H1 (cell line): ENCODE measurements at regions of chr2 and their contacts with region 1.

Region 1: GRCh38 chr2:182077451-182078142 is 91.9 kb downstream of the PPP1R1C start:
- DNase-seq: no peak
- H3K4me3 ChIP-seq: no peak overlapping the region
- H3K27ac ChIP-seq: no peak overlapping the region
- H3K4me1 ChIP-seq: no peaks in the 10 kb centered on the region
- H3K27me3 ChIP-seq: no peaks in the 10 kb centered on the region
- CTCF ChIP-seq: peak in 2 of 3 experiments; percentile 49; a peak in 2 of 4 replicates
- EP300 ChIP-seq: no peak
- POLR2A ChIP-seq: no peak
- RAD21 ChIP-seq: peak; percentile 70 to 73

Region 2: DNA sequence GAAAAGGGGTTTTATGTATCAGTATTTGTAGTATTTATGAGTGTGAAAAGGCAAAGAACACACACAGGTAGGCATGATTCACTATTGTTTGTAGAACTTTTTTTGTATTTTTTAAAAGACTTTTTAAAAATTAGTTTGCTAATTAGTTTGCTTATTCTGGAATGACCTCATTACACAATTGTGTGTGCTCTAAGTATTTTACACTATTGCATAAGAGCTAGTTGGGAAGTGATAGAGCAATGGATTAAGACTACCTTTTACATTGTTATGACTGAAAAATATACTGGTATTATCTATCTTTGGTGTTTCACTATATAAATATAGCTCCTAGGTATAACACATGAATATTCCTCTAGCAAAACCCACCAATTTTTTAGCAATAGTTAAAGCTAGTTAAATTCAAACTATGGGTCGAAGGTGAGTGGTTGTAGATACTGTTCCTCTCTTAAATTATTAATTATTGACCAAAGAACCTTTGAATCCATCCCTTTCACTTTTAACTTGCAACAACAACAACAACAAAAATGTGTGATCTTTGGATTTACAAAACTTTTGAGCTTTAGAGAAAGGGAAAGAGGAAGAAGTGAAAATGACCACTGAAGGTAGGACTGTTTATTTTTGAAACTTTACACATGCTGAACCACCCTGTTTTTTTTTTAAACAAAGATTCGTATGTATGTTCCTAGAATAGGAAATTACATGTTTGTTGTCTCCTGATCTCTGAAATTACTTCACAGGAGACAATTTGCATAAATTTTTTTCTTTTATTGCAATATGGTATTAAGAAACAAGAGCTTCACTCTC is 167.4 kb before region 1 on chr2:
- CTCF ChIA-PET with region 1: no interaction called
- POLR2A ChIA-PET with region 1: no interaction called
- DNase-seq: no peak
- H3K4me3 ChIP-seq: no peak overlapping the region
- H3K27ac ChIP-seq: no peak overlapping the region
- H3K4me1 ChIP-seq: no peaks in the 10 kb centered on the region
- H3K27me3 ChIP-seq: no peaks in the 10 kb centered on the region
- CTCF ChIP-seq: no peak
- EP300 ChIP-seq: no peak
- POLR2A ChIP-seq: no peak
- RAD21 ChIP-seq: no peak

Region 3: DNA sequence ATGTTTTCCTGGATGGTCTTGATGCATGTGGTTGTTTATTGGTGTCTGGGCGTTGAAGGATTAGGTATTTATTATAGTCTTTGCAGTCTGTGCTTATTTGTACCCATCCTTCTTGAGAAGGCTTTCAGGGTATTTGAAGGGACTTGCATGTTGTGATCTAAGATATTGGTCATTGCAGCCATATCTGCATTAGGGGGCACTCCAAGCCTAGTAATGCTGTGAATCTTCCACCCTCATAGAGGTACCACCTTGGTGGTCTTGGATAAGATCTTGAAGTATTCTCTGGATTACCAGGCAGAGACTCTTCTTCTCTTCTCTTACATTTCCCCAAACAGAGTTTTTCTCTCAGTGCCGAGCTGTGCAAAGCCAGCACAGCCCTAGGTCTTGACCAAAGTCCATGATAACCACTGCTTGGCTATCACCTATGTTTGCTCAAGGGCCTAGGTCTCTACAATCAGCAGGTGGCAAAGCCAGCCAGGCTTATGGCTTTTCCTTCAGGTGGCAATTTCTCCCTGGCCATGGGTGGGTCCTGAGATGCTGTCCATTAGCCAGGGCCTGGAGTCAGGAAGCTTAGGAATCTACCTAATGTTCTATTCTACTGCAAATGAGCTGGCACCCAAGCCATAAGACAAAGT is 107.3 kb before region 1 on chr2:
- CTCF ChIA-PET with region 1: interaction called, 18 read pairs
- POLR2A ChIA-PET with region 1: no interaction called
- DNase-seq: no peak
- H3K4me3 ChIP-seq: no peak overlapping the region
- H3K27ac ChIP-seq: no peak overlapping the region
- H3K4me1 ChIP-seq: no peaks in the 10 kb centered on the region
- H3K27me3 ChIP-seq: no peaks in the 10 kb centered on the region
- CTCF ChIP-seq: peak in 2 of 3 experiments; percentile 46 to 48; a peak in 2 of 4 replicates
- EP300 ChIP-seq: no peak
- POLR2A ChIP-seq: no peak
- RAD21 ChIP-seq: peak; percentile 71 to 75

Region 4: DNA sequence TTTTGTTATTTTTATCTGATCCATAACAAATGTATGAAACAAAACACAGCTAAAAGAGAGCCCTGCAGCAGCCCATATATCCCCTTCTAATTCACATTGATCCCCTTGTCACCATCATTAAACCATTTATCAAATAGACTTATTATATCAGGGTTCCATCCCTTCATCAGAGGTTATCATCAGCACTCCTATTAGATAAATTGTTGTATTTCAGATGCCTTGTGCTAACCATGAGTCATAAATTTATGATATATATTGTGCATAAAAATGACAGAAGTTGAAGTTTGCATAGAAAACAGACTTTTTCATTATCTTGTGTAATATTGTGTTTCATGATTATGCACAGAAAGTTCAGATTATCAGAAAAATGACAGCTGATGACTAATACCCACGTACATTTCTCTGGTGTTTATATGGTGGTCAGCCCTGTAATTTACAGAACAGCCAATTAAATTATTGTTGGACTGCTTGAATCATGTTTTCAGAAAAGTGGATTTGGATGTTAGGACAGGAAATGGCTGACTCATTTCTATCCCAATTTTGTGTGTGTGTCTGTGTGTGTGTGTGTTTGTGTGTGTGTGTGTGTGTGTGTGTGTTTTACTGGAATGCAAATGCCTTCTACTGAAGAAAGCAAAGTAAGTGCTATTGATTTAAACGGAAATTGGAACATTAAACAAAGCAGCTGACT is 11.1 kb before region 1 on chr2:
- CTCF ChIA-PET with region 1: interaction called, 30 read pairs
- POLR2A ChIA-PET with region 1: no interaction called
- DNase-seq: no peak
- H3K4me3 ChIP-seq: no peak overlapping the region
- H3K27ac ChIP-seq: no peak overlapping the region
- H3K4me1 ChIP-seq: peaks cover 0 to 6% (median 2%) of the 10 kb centered on the region in 4 experiments; a peak in 2 of 7 replicates
- H3K27me3 ChIP-seq: no peaks in the 10 kb centered on the region
- CTCF ChIP-seq: no peak
- EP300 ChIP-seq: no peak
- POLR2A ChIP-seq: no peak
- RAD21 ChIP-seq: no peak

Region 5: GRCh38 chr2:182088681-182089320 is 11.2 kb after region 1 on chr2:
- CTCF ChIA-PET with region 1: interaction called, 17 read pairs
- POLR2A ChIA-PET with region 1: no interaction called
- DNase-seq: no peak
- H3K4me3 ChIP-seq: no peak overlapping the region
- H3K27ac ChIP-seq: no peak overlapping the region
- H3K4me1 ChIP-seq: no peaks in the 10 kb centered on the region; a peak in 1 of 7 replicates
- H3K27me3 ChIP-seq: no peaks in the 10 kb centered on the region
- CTCF ChIP-seq: no peak
- EP300 ChIP-seq: no peak
- POLR2A ChIP-seq: no peak
- RAD21 ChIP-seq: no peak

Region 6: GRCh38 chr2:182132605-182133004 is 55.0 kb after region 1 on chr2:
- CTCF ChIA-PET with region 1: interaction called, 10 read pairs
- POLR2A ChIA-PET with region 1: no interaction called
- DNase-seq: no peak
- H3K4me3 ChIP-seq: no peak overlapping the region
- H3K27ac ChIP-seq: no peak overlapping the region
- H3K4me1 ChIP-seq: 0 out of 7 replicates have a peak, but pooled peaks cover 0 to 1% (median 0%) of the 10 kb centered on the region in 4 experiments
- H3K27me3 ChIP-seq: no peaks in the 10 kb centered on the region
- CTCF ChIP-seq: no peak; a peak in 1 of 4 replicates
- EP300 ChIP-seq: no peak
- POLR2A ChIP-seq: no peak
- RAD21 ChIP-seq: peak; percentile 37 to 39

Region 7: GRCh38 chr2:182372661-182373060 is 295.1 kb after region 1 on chr2:
- CTCF ChIA-PET with region 1: no interaction called
- POLR2A ChIA-PET with region 1: no interaction called
- DNase-seq: no peak
- H3K4me3 ChIP-seq: no peak overlapping the region
- H3K27ac ChIP-seq: no peak overlapping the region
- H3K4me1 ChIP-seq: no peaks in the 10 kb centered on the region
- H3K27me3 ChIP-seq: no peaks in the 10 kb centered on the region
- CTCF ChIP-seq: no peak
- EP300 ChIP-seq: no peak
- POLR2A ChIP-seq: no peak
- RAD21 ChIP-seq: no peak